ENCODE measurements at regions of chr11 and their contacts with region 1.

Region 1: GRCh38 chr11:65569973-65570918 is at the start of gene ZNRD2:
- DNase-seq: peak; percentile 97 to 99 (median 98)
- H3K4me3 ChIP-seq: peak within 1 kb of the TSS; percentile 95
- H3K4me3 Mint-ChIP-seq: peak within 1 kb of the TSS; percentile 98 to 99 (median 99)
- H3K27ac ChIP-seq: peak within 1 kb of the TSS; percentile 96
- H3K27ac Mint-ChIP-seq: peak within 1 kb of the TSS; percentile 96 to 100 (median 100)
- H3K4me1 ChIP-seq: peaks cover 76% of the 10 kb centered on the region
- H3K4me1 Mint-ChIP-seq: peaks cover 66 to 86% (median 83%) of the 10 kb centered on the region in 3 donors
- H3K27me3 ChIP-seq: no peaks in the 10 kb centered on the region
- H3K27me3 Mint-ChIP-seq: peaks cover 0 to 1% of the 10 kb centered on the region in 2 donors
- total RNA-seq, gene ZNRD2: 69.6 to 77.9 TPM

Region 2: GRCh38 chr11:64864473-64865285 is 705.6 kb before region 1 on chr11:
- CTCF ChIA-PET with region 1: no interaction called
- POLR2A ChIA-PET with region 1: interaction called, 16 read pairs
- DNase-seq: no peak
- H3K4me3 ChIP-seq: peak overlapping the region; percentile 66
- H3K4me3 Mint-ChIP-seq: peak overlapping the region; percentile 76 to 91 (median 78)
- H3K27ac ChIP-seq: peak overlapping the region; percentile 75
- H3K27ac Mint-ChIP-seq: peak overlapping the region; percentile 80 to 99 (median 96)
- H3K4me1 ChIP-seq: peaks cover 100% of the 10 kb centered on the region
- H3K4me1 Mint-ChIP-seq: peaks cover 84 to 95% (median 91%) of the 10 kb centered on the region in 3 donors
- H3K27me3 ChIP-seq: no peaks in the 10 kb centered on the region
- H3K27me3 Mint-ChIP-seq: peaks cover 0 to 1% of the 10 kb centered on the region in 2 donors

Region 3: GRCh38 chr11:65546217-65546958 is 23.9 kb before region 1 on chr11:
- CTCF ChIA-PET with region 1: interaction called, 78 read pairs
- POLR2A ChIA-PET with region 1: interaction called, 34 read pairs
- DNase-seq: peak; percentile 98 to 99 (median 99)
- H3K4me3 ChIP-seq: peak overlapping the region; percentile 54
- H3K4me3 Mint-ChIP-seq: peak overlapping the region; percentile 68 to 90 (median 83)
- H3K27ac ChIP-seq: peak overlapping the region; percentile 53
- H3K27ac Mint-ChIP-seq: peak overlapping the region; percentile 86 to 97 (median 94)
- H3K4me1 ChIP-seq: peaks cover 42% of the 10 kb centered on the region
- H3K4me1 Mint-ChIP-seq: peaks cover 38 to 49% (median 48%) of the 10 kb centered on the region in 3 donors
- H3K27me3 ChIP-seq: no peaks in the 10 kb centered on the region
- H3K27me3 Mint-ChIP-seq: no peaks in the 10 kb centered on the region

Region 4: DNA sequence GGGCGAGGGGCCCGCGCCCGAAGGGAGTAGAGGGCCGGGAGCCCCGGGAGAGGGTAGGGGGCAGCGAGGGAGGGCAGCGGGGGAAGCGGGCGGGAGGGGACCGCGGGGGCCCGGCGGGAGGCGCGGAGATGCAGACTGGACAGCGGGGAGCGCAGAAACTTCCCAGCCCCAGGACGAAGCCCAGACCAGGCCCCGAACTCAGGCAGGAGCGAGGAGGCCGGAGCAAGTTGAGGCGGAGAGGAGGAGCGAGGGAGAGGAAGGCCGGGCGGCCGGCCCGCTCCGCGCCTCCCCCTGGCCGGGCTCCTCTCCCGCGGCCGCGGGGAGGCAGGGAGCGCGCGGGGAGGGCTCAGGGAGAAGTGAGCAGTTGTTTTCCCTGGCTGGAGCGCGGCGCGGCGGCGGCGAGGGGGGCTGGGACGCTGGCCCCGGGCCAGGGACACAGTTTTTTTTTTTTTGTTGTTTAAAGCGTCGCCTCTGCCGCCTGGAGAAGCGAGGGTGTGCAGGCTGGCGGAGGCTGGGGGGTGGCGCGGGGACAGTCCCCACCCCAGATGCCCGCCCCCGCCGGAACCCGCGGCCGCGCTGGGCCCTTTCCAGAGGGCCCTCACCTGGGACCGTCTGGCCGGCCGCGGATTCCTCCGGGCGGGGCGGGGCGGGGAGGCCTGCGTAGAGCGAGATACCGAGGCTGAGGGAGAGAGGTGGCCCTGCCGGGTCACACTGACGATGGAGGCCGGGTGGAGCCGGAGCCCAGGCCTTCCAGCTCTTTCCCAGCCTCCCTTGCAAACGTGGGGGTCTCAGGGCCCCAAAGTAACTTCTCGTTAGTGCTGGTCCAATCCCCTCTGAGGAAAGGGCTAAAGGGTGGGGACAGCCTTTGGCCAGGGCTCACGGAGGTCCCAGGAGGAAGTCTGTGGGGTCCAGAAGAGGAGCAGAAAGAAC is 12.0 kb before region 1 on chr11 and contains the start of gene LTBP3:
- CTCF ChIA-PET with region 1: interaction called, 14 read pairs
- POLR2A ChIA-PET with region 1: interaction called, 17 read pairs
- DNase-seq: peak in 4 of 5 donors; percentile 32 to 63 (median 40)
- H3K4me3 ChIP-seq: peak within 1 kb of the TSS; percentile 53
- H3K4me3 Mint-ChIP-seq: peak within 1 kb of the TSS; percentile 80 to 94 (median 91)
- H3K27ac ChIP-seq: peak within 1 kb of the TSS; percentile 54
- H3K27ac Mint-ChIP-seq: peak within 1 kb of the TSS; percentile 84 to 97 (median 94)
- H3K4me1 ChIP-seq: peaks cover 59% of the 10 kb centered on the region
- H3K4me1 Mint-ChIP-seq: peaks cover 37 to 62% (median 44%) of the 10 kb centered on the region in 3 donors
- H3K27me3 ChIP-seq: no peaks in the 10 kb centered on the region
- H3K27me3 Mint-ChIP-seq: peaks cover 0 to 3% of the 10 kb centered on the region in 2 donors
- total RNA-seq, gene LTBP3: 33.2 to 35.4 TPM

Region 5: DNA sequence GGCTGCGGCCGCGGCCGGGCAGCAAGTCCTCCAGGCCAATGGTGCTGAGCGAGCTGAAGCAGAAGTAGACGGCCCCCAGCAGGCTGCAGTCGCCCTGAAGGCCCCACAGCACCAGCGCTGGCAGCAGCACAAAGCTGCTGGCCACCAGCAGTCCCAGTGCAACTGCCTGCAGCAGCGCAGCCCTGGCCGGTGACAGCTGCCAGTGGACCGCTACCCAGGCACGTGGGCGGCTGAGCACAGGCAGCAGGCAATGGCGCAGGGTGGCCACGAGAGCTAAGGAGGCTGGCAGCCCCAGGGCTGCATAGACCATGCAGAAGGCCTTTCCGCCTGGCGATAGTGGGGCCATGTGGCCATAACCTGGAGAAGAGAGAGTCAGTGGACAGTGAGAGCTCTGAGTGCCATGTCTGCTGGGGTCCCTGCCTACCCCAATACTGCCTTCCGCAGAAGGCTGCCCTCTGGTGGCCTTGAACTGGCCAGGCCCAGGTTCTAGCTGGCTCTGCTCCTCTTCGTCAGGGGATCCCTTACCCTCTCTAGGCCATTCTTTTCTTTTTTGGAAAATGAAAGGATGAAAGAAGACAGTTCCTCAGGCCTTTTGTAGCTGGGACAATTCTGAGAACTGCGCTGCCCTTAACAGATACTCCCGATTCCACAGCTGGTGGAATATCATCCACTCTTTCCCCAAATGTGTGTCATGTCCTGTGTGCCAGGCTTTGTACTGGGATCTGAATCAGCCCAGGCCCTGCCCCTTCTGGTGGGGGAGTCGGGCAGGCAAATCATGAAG is 23.5 kb after region 1 on chr11:
- CTCF ChIA-PET with region 1: interaction called, 66 read pairs
- POLR2A ChIA-PET with region 1: interaction called, 32 read pairs
- DNase-seq: peak in 2 of 5 donors; percentile 45 to 66
- H3K4me3 ChIP-seq: no peak overlapping the region
- H3K4me3 Mint-ChIP-seq: no peak overlapping the region
- H3K27ac ChIP-seq: no peak overlapping the region
- H3K27ac Mint-ChIP-seq: peak overlapping the region in 2 of 8 donors; percentile 48 to 84
- H3K4me1 ChIP-seq: peaks cover 17% of the 10 kb centered on the region
- H3K4me1 Mint-ChIP-seq: peaks cover 9 to 19% (median 11%) of the 10 kb centered on the region in 3 donors
- H3K27me3 ChIP-seq: no peaks in the 10 kb centered on the region
- H3K27me3 Mint-ChIP-seq: no peaks in the 10 kb centered on the region

Region 6: DNA sequence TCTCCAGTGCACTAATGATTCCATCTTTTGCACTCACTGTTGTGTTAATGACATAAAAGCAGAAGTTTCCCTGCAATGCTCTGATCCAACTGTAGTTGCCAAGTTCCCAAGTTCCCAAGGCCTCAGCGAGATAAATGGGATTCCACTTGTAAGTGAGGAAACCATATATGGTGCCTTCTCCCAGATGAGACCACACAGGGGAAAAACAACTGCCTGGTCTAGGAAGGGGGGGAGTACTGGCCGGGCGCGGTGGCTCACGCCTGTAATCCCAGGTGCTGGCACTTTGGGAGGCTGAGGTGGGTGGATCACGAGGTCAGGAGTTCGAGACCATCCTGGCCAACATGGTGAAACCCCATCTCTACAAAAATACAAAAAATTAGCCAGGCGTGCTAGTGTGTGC is 115.7 kb after region 1 on chr11:
- CTCF ChIA-PET with region 1: no interaction called
- POLR2A ChIA-PET with region 1: no interaction called
- DNase-seq: no peak
- H3K4me3 ChIP-seq: no peak overlapping the region
- H3K4me3 Mint-ChIP-seq: no peak overlapping the region
- H3K27ac ChIP-seq: no peak overlapping the region
- H3K27ac Mint-ChIP-seq: no peak overlapping the region
- H3K4me1 ChIP-seq: no peaks in the 10 kb centered on the region
- H3K4me1 Mint-ChIP-seq: no peaks in the 10 kb centered on the region
- H3K27me3 ChIP-seq: no peaks in the 10 kb centered on the region
- H3K27me3 Mint-ChIP-seq: peaks cover 6 to 19% of the 10 kb centered on the region in 2 donors